ENCODE measurements at regions of chr2 and their contacts with region 1.

Region 1: GRCh38 chr2:38508311-38509039 is 94.3 kb downstream of the HNRNPLL start:
- DNase-seq: peak; percentile 69 to 76 (median 70)
- H3K4me3 ChIP-seq: no peak overlapping the region
- H3K4me3 Mint-ChIP-seq: no peak overlapping the region
- H3K27ac ChIP-seq: no peak overlapping the region
- H3K27ac Mint-ChIP-seq: peak overlapping the region in 2 of 7 donors; percentile 3 to 63
- H3K4me1 ChIP-seq: no peaks in the 10 kb centered on the region
- H3K4me1 Mint-ChIP-seq: peaks cover 2 to 6% (median 4%) of the 10 kb centered on the region in 4 donors
- H3K27me3 ChIP-seq: no peaks in the 10 kb centered on the region
- H3K27me3 Mint-ChIP-seq: peaks cover 4 to 5% of the 10 kb centered on the region in 2 donors

Region 2: GRCh38 chr2:38308821-38309220 is 199.7 kb before region 1 on chr2:
- CTCF ChIA-PET with region 1: interaction called, 242 read pairs
- POLR2A ChIA-PET with region 1: no interaction called
- intact Hi-C with region 1: no loop called
- DNase-seq: no peak
- H3K4me3 ChIP-seq: no peak overlapping the region
- H3K4me3 Mint-ChIP-seq: no peak overlapping the region
- H3K27ac ChIP-seq: no peak overlapping the region
- H3K27ac Mint-ChIP-seq: no peak overlapping the region
- H3K4me1 ChIP-seq: no peaks in the 10 kb centered on the region
- H3K4me1 Mint-ChIP-seq: peaks cover 14 to 26% (median 17%) of the 10 kb centered on the region in 4 donors
- H3K27me3 ChIP-seq: no peaks in the 10 kb centered on the region
- H3K27me3 Mint-ChIP-seq: no peaks in the 10 kb centered on the region

Region 3: GRCh38 chr2:38323623-38324022 is 184.9 kb before region 1 on chr2:
- CTCF ChIA-PET with region 1: interaction called, 242 read pairs
- POLR2A ChIA-PET with region 1: no interaction called
- intact Hi-C with region 1: no loop called
- DNase-seq: no peak
- H3K4me3 ChIP-seq: no peak overlapping the region
- H3K4me3 Mint-ChIP-seq: no peak overlapping the region
- H3K27ac ChIP-seq: no peak overlapping the region
- H3K27ac Mint-ChIP-seq: peak overlapping the region in 1 of 7 donors; percentile 32
- H3K4me1 ChIP-seq: no peaks in the 10 kb centered on the region
- H3K4me1 Mint-ChIP-seq: peaks cover 14 to 37% (median 22%) of the 10 kb centered on the region in 4 donors
- H3K27me3 ChIP-seq: no peaks in the 10 kb centered on the region
- H3K27me3 Mint-ChIP-seq: no peaks in the 10 kb centered on the region

Region 4: DNA sequence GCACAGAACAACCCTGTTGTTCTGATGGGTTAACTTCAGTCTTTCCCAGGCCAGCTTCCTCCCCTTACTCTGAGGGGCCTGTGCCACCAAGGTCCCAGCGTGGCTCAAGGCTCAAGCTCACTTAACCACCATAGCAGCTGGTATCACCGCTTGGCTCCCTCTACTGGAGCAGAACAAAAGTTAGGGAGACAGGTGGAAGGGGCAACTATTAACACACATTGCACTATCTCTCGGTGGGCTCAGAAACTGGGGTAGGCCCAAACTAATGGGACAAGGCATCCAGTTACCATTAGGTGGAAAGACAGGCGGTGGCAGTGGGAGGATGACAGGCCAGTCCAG is 42.7 kb before region 1 on chr2:
- CTCF ChIA-PET with region 1: interaction called, 11 read pairs
- POLR2A ChIA-PET with region 1: no interaction called
- intact Hi-C with region 1: no loop called
- DNase-seq: peak in 4 of 5 donors; percentile 5 to 14 (median 7)
- H3K4me3 ChIP-seq: no peak overlapping the region
- H3K4me3 Mint-ChIP-seq: no peak overlapping the region
- H3K27ac ChIP-seq: no peak overlapping the region
- H3K27ac Mint-ChIP-seq: no peak overlapping the region
- H3K4me1 ChIP-seq: no peaks in the 10 kb centered on the region
- H3K4me1 Mint-ChIP-seq: peaks cover 0 to 2% (median 0%) of the 10 kb centered on the region in 4 donors
- H3K27me3 ChIP-seq: no peaks in the 10 kb centered on the region
- H3K27me3 Mint-ChIP-seq: peaks cover 0 to 6% of the 10 kb centered on the region in 2 donors

Measured in CD4-positive, alpha-beta memory T cell (primary cell).